ENCODE measurements at regions of chr2 and their contacts with region 1.

Region 1: GRCh38 chr2:213251618-213252017 is 32.6 kb upstream of the SPAG16 start:
- DNase-seq: peak; percentile 70
- H3K4me3 ChIP-seq: no peak overlapping the region
- H3K27ac ChIP-seq: no peak overlapping the region
- H3K4me1 ChIP-seq: no peaks in the 10 kb centered on the region
- H3K27me3 ChIP-seq: peaks cover 0 to 3% of the 10 kb centered on the region in 2 experiments
- CTCF ChIP-seq: peak; percentile 33 to 35
- POLR2A ChIP-seq: no peak

Region 2: GRCh38 chr2:212686285-212686895 is 565.2 kb before region 1 on chr2:
- CTCF ChIA-PET with region 1: interaction called, 3 read pairs
- POLR2A ChIA-PET with region 1: no interaction called
- dilution Hi-C with region 1: no loop called
- intact Hi-C with region 1: loop called (anchors 2 kb)
- DNase-seq: peak; percentile 67
- H3K4me3 ChIP-seq: no peak overlapping the region
- H3K27ac ChIP-seq: no peak overlapping the region
- H3K4me1 ChIP-seq: peaks cover 3% of the 10 kb centered on the region
- H3K27me3 ChIP-seq: no peaks in the 10 kb centered on the region
- CTCF ChIP-seq: peak; percentile 60 to 68
- POLR2A ChIP-seq: no peak

Region 3: GRCh38 chr2:213232649-213233437 is 18.8 kb before region 1 on chr2:
- CTCF ChIA-PET with region 1: no interaction called
- POLR2A ChIA-PET with region 1: no interaction called
- dilution Hi-C with region 1: no loop called
- intact Hi-C with region 1: no loop called
- DNase-seq: no peak
- H3K4me3 ChIP-seq: no peak overlapping the region
- H3K27ac ChIP-seq: no peak overlapping the region
- H3K4me1 ChIP-seq: no peaks in the 10 kb centered on the region
- H3K27me3 ChIP-seq: no peaks in the 10 kb centered on the region
- CTCF ChIP-seq: no peak
- POLR2A ChIP-seq: no peak

Region 4: DNA sequence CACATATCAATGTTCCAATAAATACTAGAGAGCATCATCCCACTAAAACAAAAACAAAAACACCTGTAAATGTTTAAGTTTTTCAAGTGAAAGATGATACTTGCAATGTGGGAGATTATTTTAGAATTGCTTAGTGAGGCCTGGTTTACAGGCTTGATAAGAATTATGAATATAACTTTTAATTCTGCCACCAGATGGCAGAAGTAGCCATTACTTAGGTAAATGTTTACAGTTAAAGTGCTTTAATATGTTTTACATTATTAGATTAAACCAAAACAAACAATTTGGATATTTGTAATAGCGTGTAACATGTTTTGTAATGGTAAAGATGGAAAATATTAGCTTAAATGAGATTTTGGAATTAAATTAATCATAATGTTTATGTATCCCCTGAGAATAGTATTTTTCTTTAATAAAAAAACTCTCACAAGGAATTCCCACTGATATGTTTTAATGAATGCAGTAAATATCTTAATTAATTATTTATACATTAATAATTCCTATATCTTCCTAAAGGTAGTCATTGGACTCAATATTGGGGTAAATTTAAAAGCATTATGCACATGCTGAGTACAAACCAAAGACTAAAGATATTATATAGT is 554.6 kb after region 1 on chr2:
- CTCF ChIA-PET with region 1: no interaction called
- POLR2A ChIA-PET with region 1: no interaction called
- dilution Hi-C with region 1: no loop called
- intact Hi-C with region 1: loop called (anchors 2 kb)
- DNase-seq: peak; percentile 30
- H3K4me3 ChIP-seq: no peak overlapping the region
- H3K27ac ChIP-seq: no peak overlapping the region
- H3K4me1 ChIP-seq: no peaks in the 10 kb centered on the region
- H3K27me3 ChIP-seq: no peaks in the 10 kb centered on the region
- CTCF ChIP-seq: no peak
- POLR2A ChIP-seq: no peak

Region 5: DNA sequence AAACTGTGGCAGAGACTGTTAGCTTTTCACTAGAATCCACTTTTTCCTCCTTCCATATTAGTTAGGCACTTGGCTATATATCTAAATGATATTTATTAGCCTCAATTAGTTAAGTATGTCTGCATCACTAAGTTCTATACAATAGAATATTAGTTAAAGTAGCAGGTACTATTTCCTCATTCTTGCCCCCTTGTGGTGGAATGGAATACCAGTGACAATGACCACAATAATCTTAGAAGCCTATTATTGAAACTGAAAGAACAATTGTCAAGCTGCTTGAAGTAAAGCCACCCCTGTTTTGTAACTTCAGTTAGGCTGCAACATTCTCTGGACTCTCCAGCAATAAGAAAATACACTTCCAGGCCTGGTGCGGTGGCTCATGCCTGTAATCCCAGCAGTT is 682.9 kb after region 1 on chr2:
- CTCF ChIA-PET with region 1: interaction called, 22 read pairs
- POLR2A ChIA-PET with region 1: no interaction called
- dilution Hi-C with region 1: no loop called
- intact Hi-C with region 1: loop called (anchors 1 kb)
- DNase-seq: peak; percentile 42
- H3K4me3 ChIP-seq: no peak overlapping the region
- H3K27ac ChIP-seq: no peak overlapping the region
- H3K4me1 ChIP-seq: no peaks in the 10 kb centered on the region
- H3K27me3 ChIP-seq: no peaks in the 10 kb centered on the region
- CTCF ChIP-seq: peak; percentile 30 to 33
- POLR2A ChIP-seq: no peak

Region 6: DNA sequence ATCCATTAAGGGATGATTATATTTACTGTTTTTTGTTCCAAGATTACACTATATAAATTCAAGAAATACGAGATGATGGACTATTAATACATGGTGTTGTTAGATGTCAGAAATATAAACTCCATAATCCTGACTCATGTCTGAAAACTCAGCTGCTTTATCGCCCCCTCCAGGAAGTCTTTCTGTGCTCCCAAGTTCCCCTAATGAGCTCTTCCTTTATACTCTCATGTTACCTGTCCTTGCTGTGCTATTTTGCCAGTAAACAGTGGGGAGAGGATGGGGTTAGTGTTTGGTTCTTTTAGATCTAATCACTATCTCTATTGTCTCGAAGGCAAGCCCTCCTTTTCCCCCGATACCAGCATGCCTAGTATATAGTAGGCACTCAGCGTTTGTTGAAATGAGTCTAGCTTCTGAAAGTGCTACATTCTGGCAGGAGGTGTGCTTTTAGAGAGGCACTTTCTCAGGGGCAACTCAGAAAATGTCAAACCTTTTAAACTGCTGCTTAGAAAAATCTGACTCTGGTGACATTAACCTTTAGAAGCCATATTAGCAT is 1579.3 kb after region 1 on chr2:
- CTCF ChIA-PET with region 1: interaction called, 15 read pairs
- POLR2A ChIA-PET with region 1: no interaction called
- dilution Hi-C with region 1: no loop called
- intact Hi-C with region 1: loop called (anchors 5 kb)
- DNase-seq: peak; percentile 40
- H3K4me3 ChIP-seq: no peak overlapping the region
- H3K27ac ChIP-seq: no peak overlapping the region
- H3K4me1 ChIP-seq: no peaks in the 10 kb centered on the region
- H3K27me3 ChIP-seq: peaks cover 0 to 6% of the 10 kb centered on the region in 2 experiments
- CTCF ChIP-seq: peak in 1 of 2 donors; percentile 35
- POLR2A ChIP-seq: no peak

Region 7: DNA sequence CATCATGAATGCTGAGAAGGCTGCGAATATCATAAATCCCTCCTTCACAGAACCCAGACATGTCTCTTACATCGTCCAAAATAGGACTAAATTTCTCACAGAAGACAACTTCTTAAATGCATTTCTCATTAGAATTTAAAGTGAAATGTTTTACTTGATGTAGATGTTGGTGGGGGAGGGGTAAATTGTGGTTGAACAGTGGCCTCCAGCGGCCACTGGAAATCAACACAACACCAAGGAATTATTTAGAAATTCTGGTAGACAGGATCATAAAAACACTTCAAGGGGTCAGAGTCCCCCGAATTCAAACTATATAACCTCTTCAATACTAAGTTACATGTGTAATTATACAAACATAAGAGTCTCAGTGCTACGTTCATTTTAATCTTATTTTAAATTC is 1750.9 kb after region 1 on chr2:
- CTCF ChIA-PET with region 1: interaction called, 4 read pairs
- POLR2A ChIA-PET with region 1: no interaction called
- dilution Hi-C with region 1: no loop called
- intact Hi-C with region 1: loop called (anchors 2 kb)
- DNase-seq: peak; percentile 33
- H3K4me3 ChIP-seq: no peak overlapping the region
- H3K27ac ChIP-seq: no peak overlapping the region
- H3K4me1 ChIP-seq: no peaks in the 10 kb centered on the region
- H3K27me3 ChIP-seq: peaks cover 0 to 2% of the 10 kb centered on the region in 2 experiments
- CTCF ChIP-seq: peak; percentile 34 to 40
- POLR2A ChIP-seq: no peak

Measured in endothelial cell of umbilical vein (primary cell).